Activated T-helper 1 cell treated with anti-CD3 and anti-CD28 coated beads, Interleukin-12 subunit alpha, Interleukin-12 subunit beta, Interleukin-2, Interleukin-4 antibody, amounts not matched to agents 30 ng/mL and 10 ng/mL and 1 ng/mL, durations not matched to agents 14 hours and 24 hours and 36 hours (primary cell): ENCODE measurements at regions of chrX and their contacts with region 1.

Region 1: GRCh38 chrX:46325312-46325877 is 219.8 kb downstream of the ZNF674 start:
- DNase-seq: no peak
- H3K4me3 Mint-ChIP-seq: no peak overlapping the region
- H3K27ac Mint-ChIP-seq: peak overlapping the region; percentile 65
- H3K4me1 Mint-ChIP-seq: peaks cover 49% of the 10 kb centered on the region
- H3K27me3 Mint-ChIP-seq: no peaks in the 10 kb centered on the region

Region 2: DNA sequence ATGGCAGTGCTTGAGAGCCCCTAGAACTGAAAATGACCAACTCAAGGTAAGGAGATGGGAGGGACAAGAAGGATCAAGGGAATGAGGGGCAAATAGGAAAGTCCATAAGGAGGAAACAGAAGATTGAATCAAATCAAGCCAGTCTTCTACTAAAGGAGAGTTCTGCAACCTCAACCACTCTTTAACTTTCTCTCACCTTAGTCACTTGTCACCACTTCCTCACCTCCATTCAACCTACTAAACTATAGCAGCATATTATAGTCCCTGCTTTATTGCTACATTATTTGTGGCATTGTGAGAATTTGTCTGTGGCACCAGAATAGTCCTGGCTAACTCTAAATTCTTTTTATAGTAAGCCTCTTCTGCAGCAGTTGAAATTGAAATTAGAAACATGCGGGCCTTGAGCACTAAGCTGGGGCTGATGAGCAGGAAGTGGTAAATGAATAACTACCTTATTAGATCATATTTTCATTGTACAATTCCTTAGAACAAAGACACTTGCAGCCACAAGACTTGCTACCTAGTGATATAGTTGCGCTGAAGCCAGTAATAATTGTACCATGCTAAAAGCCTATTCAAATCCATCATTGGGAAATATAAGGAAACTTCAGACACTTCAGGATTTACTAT is 117.1 kb before region 1 on chrX:
- intact Hi-C with region 1: loop called (anchors 10 kb)
- DNase-seq: no peak
- H3K4me3 Mint-ChIP-seq: no peak overlapping the region
- H3K27ac Mint-ChIP-seq: no peak overlapping the region
- H3K4me1 Mint-ChIP-seq: peaks cover 25% of the 10 kb centered on the region
- H3K27me3 Mint-ChIP-seq: peaks cover 2% of the 10 kb centered on the region

Region 3: GRCh38 chrX:46310815-46311497 is 14.4 kb before region 1 on chrX:
- intact Hi-C with region 1: loop called (anchors 1 kb)
- DNase-seq: no peak
- H3K4me3 Mint-ChIP-seq: no peak overlapping the region
- H3K27ac Mint-ChIP-seq: peak overlapping the region; percentile 80
- H3K4me1 Mint-ChIP-seq: peaks cover 8% of the 10 kb centered on the region
- H3K27me3 Mint-ChIP-seq: no peaks in the 10 kb centered on the region

Region 4: DNA sequence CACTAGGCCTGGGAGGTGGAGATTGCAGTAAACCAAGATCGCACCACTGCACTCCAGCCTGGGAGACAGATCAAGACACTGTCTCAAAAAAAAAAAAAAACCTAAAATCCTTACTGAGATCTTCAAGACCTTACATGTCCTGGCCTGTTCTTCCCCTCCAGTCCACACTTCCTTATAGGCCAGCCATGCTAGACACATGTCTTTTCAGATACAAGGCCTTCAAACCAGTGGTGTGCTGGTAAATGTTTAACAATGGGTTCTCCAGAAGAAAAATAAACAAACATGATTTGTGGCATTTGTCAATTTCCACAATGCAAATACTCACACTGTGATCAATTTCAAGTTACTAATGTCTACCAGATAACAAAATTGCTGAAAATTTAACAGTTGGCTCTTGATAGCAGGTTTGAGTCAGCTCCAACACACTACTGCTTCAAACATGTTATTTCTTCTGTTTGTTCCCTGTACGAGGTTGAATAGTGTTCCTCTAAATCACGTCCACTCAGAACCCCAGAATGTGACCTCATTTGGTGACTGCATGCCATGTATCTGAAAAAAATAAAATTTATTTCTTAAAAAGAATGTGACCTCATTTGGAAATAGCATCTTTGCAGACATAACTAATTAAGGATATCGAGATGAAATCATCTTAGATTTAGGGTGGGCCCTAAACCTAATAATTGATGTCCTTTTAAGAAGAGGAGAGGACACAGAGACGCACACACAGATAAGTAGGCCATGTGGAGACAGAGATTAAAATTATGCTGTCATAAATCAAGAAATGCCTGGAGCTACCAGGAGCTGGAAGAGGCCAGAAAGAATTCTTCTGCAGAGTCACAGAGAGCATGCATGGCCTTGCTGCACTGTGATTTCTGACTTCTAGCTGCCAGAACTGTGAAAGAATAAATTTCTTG is 75.4 kb after region 1 on chrX:
- intact Hi-C with region 1: no loop called
- DNase-seq: no peak
- H3K4me3 Mint-ChIP-seq: no peak overlapping the region
- H3K27ac Mint-ChIP-seq: no peak overlapping the region
- H3K4me1 Mint-ChIP-seq: no peaks in the 10 kb centered on the region
- H3K27me3 Mint-ChIP-seq: peaks cover 2% of the 10 kb centered on the region

Region 5: GRCh38 chrX:46611658-46612362 is 286.4 kb after region 1 on chrX:
- intact Hi-C with region 1: loop called (anchors 10 kb)
- DNase-seq: peak; percentile 38
- H3K4me3 Mint-ChIP-seq: peak overlapping the region; percentile 11
- H3K27ac Mint-ChIP-seq: peak overlapping the region; percentile 70
- H3K4me1 Mint-ChIP-seq: peaks cover 66% of the 10 kb centered on the region
- H3K27me3 Mint-ChIP-seq: no peaks in the 10 kb centered on the region